CD4-positive, alpha-beta memory T cell (primary cell): ENCODE measurements at regions of chr10 and their contacts with region 1.

Region 1: GRCh38 chr10:94320285-94320914 is 42.3 kb downstream of the NOC3L start:
- DNase-seq: peak; percentile 44 to 53 (median 47)
- H3K4me3 ChIP-seq: no peak overlapping the region
- H3K4me3 Mint-ChIP-seq: no peak overlapping the region
- H3K27ac ChIP-seq: no peak overlapping the region
- H3K27ac Mint-ChIP-seq: no peak overlapping the region
- H3K4me1 ChIP-seq: no peaks in the 10 kb centered on the region
- H3K4me1 Mint-ChIP-seq: no peaks in the 10 kb centered on the region
- H3K27me3 ChIP-seq: no peaks in the 10 kb centered on the region
- H3K27me3 Mint-ChIP-seq: no peaks in the 10 kb centered on the region

Region 2: DNA sequence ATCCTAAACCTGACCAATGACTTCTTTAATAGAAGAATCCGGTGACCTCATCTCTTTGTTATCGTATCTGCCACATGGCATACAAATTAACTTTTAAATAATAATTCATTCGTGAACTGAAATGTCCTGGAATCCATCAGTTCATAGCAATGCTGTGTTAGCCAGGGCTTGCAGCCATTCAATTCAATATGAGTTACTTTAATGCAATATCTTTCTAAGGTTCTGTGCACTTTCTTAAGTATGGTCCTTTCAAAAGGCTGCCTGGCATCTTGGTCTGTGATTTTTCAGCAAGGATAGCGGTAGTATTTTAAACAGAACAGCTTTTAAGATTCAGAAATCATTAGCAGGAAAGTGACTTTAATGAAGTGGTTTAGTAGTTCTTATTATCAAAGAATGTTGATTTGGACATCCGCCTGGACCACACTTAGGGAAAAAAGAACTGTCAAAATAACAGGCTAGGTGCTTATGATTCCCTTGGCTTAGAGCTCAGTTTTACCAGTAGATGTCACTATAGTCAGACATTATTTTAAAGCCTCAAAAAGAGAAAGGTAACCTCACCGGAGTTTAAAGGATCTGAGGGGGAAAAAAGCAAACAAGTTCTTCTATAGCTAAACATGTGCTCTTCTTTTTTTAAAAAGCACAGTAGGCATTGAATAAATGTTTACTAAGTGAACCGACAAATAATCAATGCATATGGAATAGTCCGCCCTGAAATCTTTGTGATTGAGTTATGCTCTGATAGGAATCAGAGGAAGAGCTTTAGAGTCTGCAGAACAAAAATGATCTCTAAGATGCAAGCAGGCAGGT is 403.9 kb before region 1 on chr10:
- CTCF ChIA-PET with region 1: interaction called, 17 read pairs
- POLR2A ChIA-PET with region 1: no interaction called
- intact Hi-C with region 1: loop called (anchors 2 kb)
- DNase-seq: no peak
- H3K4me3 ChIP-seq: no peak overlapping the region
- H3K4me3 Mint-ChIP-seq: no peak overlapping the region
- H3K27ac ChIP-seq: no peak overlapping the region
- H3K27ac Mint-ChIP-seq: no peak overlapping the region
- H3K4me1 ChIP-seq: no peaks in the 10 kb centered on the region
- H3K4me1 Mint-ChIP-seq: peaks cover 0 to 4% (median 0%) of the 10 kb centered on the region in 4 donors
- H3K27me3 ChIP-seq: no peaks in the 10 kb centered on the region
- H3K27me3 Mint-ChIP-seq: no peaks in the 10 kb centered on the region

Region 3: GRCh38 chr10:94308866-94309265 is 11.5 kb before region 1 on chr10:
- CTCF ChIA-PET with region 1: interaction called, 42 read pairs
- POLR2A ChIA-PET with region 1: no interaction called
- intact Hi-C with region 1: no loop called
- DNase-seq: no peak
- H3K4me3 ChIP-seq: no peak overlapping the region
- H3K4me3 Mint-ChIP-seq: no peak overlapping the region
- H3K27ac ChIP-seq: no peak overlapping the region
- H3K27ac Mint-ChIP-seq: no peak overlapping the region
- H3K4me1 ChIP-seq: no peaks in the 10 kb centered on the region
- H3K4me1 Mint-ChIP-seq: no peaks in the 10 kb centered on the region
- H3K27me3 ChIP-seq: no peaks in the 10 kb centered on the region
- H3K27me3 Mint-ChIP-seq: peaks cover 20 to 39% of the 10 kb centered on the region in 2 donors

Region 4: DNA sequence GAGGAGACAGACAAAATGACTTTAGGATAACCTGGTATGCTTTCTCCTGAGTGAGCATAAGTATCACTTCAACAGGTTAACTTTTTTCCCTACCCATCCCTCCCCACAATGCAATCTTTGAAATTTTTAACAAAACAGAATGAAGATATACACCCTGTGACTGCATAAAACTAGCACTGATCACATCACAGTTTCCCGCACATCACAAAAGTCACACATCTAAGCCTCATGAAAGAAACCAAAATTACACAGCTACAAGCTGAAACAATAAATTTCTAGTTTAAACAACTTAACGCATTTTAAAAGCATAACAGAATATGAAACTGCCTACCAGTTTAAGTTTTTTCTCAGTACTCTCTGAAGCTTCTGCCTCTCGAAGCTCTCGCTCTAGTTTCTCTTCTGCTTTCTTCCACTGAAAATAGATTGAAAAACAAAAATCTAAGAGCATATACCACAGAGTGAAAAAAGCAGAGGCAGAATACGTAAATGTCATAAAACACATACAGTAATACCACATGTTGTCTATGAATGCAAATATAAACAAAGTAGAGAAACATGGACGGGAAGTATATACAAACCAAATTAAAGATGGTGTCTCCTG is 24.2 kb after region 1 on chr10:
- CTCF ChIA-PET with region 1: interaction called, 19 read pairs
- POLR2A ChIA-PET with region 1: no interaction called
- intact Hi-C with region 1: no loop called
- DNase-seq: no peak
- H3K4me3 ChIP-seq: no peak overlapping the region
- H3K4me3 Mint-ChIP-seq: no peak overlapping the region
- H3K27ac ChIP-seq: no peak overlapping the region
- H3K27ac Mint-ChIP-seq: peak overlapping the region in 1 of 7 donors; percentile 52
- H3K4me1 ChIP-seq: no peaks in the 10 kb centered on the region
- H3K4me1 Mint-ChIP-seq: peaks cover 0 to 3% (median 1%) of the 10 kb centered on the region in 4 donors
- H3K27me3 ChIP-seq: no peaks in the 10 kb centered on the region
- H3K27me3 Mint-ChIP-seq: no peaks in the 10 kb centered on the region

Region 5: GRCh38 chr10:94362360-94363250 is 42.2 kb after region 1 on chr10 and contains the start of gene NOC3L:
- CTCF ChIA-PET with region 1: interaction called, 8 read pairs
- POLR2A ChIA-PET with region 1: no interaction called
- intact Hi-C with region 1: loop called (anchors 2 kb)
- DNase-seq: peak; percentile 91 to 93 (median 92)
- H3K4me3 ChIP-seq: peak within 1 kb of the TSS; percentile 64 to 82
- H3K4me3 Mint-ChIP-seq: peak within 1 kb of the TSS; percentile 94 to 97 (median 96)
- H3K27ac ChIP-seq: peak within 1 kb of the TSS; percentile 86
- H3K27ac Mint-ChIP-seq: peak within 1 kb of the TSS; percentile 93 to 99 (median 97)
- H3K4me1 ChIP-seq: peaks cover 26% of the 10 kb centered on the region
- H3K4me1 Mint-ChIP-seq: peaks cover 25 to 43% (median 34%) of the 10 kb centered on the region in 4 donors
- H3K27me3 ChIP-seq: no peaks in the 10 kb centered on the region
- H3K27me3 Mint-ChIP-seq: peaks cover 5 to 9% of the 10 kb centered on the region in 2 donors
- total RNA-seq, gene NOC3L: 21.8 to 22.5 TPM